ENCODE measurements at regions of chr19 and their contacts with region 1.

Region 1: DNA sequence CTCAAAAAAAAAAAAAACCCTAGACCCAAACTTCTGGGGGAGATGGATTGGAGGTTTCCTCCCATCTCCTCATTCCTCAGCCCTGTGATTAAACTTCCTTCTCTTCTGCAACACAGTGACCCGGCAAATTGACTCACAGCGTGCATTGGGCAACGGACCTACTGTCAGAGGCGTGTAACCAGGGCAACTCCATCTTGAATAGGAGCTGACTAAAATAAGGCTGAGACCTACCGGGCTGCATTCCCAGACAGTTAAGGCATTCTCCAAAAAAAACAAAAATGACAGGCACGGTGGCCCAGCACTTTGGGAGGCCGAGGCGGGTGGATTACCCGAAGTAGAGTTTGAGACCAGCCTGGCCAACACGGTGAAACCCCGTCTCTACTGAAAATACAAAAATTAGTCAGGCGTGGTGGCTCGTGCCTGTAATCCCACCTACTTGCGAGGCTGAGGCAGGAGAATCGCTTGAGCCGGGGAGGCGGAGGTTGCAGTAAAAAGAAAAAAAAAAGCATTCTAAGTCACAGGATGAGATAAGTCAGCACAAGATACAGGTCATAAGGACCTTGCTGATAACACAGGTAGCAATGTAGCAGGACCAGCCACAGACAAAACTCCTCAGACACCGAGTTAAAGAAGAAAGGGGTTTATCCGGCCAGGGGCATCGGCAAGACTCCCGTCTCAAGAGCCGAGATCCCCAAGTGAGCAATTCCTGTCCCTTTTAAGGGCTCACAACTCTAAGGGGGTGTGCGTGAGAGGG is 5.4 kb upstream of the NLRP7 start:
- DNase-seq: no peak
- H3K4me3 ChIP-seq: no peak overlapping the region
- H3K27ac ChIP-seq: no peak overlapping the region
- H3K4me1 ChIP-seq: no peaks in the 10 kb centered on the region
- H3K27me3 ChIP-seq: no peaks in the 10 kb centered on the region
- CTCF ChIP-seq: no peak
- POLR2A ChIP-seq: no peak

Region 2: DNA sequence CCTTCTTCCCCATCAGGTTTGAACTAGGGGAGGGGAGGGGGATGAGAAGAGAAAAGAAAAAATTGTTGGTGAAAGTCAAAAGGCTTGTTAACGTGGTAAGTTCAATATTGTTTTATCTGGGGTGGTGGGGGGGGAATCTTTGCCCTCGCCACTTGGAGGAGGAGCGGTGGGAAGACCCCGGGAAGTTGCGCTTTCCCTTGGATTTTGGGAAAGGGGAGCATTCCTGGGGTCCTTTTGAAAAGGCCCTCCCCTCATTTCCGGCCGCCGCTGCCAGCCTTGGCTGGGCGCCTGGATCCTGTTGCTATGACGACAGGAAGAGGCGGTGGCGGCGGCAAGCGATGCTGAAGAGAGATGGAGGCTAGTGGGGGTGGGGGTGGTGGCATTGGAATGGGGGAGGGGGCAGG is 994.6 kb before region 1 on chr19:
- intact Hi-C with region 1: no loop called
- DNase-seq: no peak
- H3K4me3 ChIP-seq: no peak overlapping the region
- H3K27ac ChIP-seq: no peak overlapping the region
- H3K4me1 ChIP-seq: no peaks in the 10 kb centered on the region
- H3K27me3 ChIP-seq: peaks cover 8 to 66% of the 10 kb centered on the region in 2 donors
- CTCF ChIP-seq: no peak
- POLR2A ChIP-seq: no peak

Region 3: DNA sequence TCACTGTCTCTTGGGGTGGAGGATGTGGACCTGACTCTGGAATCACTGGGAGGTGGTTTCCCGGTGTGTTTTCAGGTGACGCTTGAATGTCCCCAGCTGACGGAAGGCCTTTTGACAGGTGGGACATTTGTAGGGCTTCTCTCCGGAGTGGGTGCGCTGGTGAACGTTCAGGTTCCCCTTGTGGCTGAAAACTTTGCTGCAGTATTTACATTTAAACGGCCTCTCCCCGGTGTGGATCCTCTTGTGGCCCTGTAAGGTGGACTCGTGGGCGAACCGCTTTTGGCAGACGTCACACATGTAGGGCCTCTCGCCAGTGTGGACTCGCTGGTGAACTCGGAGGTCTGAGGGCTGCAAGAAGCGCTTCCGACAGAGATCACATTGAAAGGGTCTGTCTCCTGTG is 1237.0 kb after region 1 on chr19:
- intact Hi-C with region 1: loop called (anchors 5 kb)
- DNase-seq: no peak
- H3K4me3 ChIP-seq: no peak overlapping the region
- H3K27ac ChIP-seq: no peak overlapping the region
- H3K4me1 ChIP-seq: no peaks in the 10 kb centered on the region
- H3K27me3 ChIP-seq: no peaks in the 10 kb centered on the region
- CTCF ChIP-seq: no peak
- POLR2A ChIP-seq: no peak

Measured in breast epithelium (tissue), 4 donors.